Dorsolateral prefrontal cortex (tissue), 120 donors: ENCODE measurements at regions of chr11 and their contacts with region 1.

Region 1: GRCh38 chr11:72112321-72113219 is at the start of gene ANAPC15:
- DNase-seq: peak; percentile 84 to 99 (median 96)
- H3K4me3 ChIP-seq: peak within 1 kb of the TSS; percentile 62 to 100 (median 78)
- H3K27ac ChIP-seq: peak within 1 kb of the TSS; percentile 94 to 100 (median 98)
- H3K27me3 ChIP-seq: no peaks in the 10 kb centered on the region
- CTCF ChIP-seq: peak in 18 of 56 donors; percentile 4 to 38 (median 20)
- total RNA-seq, gene ANAPC15: 28.2 to 59.0 (median 40.8) TPM

Region 2: GRCh38 chr11:71928737-71929452 is 183.7 kb before region 1 on chr11 and contains the start of gene RNF121:
- intact Hi-C with region 1: loop called in 1 of 2 experiments (anchors 5 kb)
- DNase-seq: peak; percentile 96 to 99 (median 98)
- H3K4me3 ChIP-seq: peak within 1 kb of the TSS; percentile 64 to 99 (median 88)
- H3K27ac ChIP-seq: peak within 1 kb of the TSS in 58 of 59 donors; percentile 27 to 96 (median 87)
- H3K27me3 ChIP-seq: no peaks in the 10 kb centered on the region
- CTCF ChIP-seq: peak in 10 of 56 donors; percentile 3 to 58 (median 12)
- total RNA-seq, gene RNF121: 25.6 to 48.0 (median 34.6) TPM

Region 3: DNA sequence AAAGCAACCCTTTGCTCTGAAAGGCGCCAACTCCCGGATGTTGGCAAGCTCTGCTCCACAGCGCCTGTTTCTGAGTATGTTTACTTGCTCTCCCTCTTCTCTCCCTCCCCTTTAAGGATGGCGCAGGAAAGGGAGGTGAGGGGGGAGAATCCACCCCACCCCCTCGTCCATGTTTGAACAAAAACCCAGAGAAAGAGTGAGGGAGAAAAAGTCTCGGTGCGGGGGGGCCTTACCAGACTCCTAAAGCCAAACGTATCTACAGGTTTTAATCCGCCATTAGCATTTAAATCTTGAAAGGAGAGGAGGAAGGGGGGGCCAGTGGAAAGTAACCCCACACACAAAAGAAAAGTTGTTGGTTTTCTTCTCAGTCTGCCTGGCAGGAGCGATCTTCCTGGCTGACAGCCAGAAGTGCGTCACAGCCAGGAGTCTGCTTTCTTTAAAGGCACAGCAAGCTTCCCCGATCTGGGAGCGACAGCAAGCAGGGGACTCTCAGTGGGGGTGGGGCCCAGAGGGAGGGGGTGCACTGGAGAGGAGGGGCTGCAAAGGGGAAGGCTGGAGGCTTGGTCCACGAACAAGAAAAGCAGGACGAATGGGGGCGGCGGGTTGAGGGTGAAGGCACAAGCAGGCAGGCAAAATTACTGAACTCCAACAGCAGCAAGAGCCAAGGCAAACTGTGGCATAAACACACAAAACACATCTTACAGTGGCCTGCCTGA is 71.7 kb before region 1 on chr11:
- intact Hi-C with region 1: loop called (anchors 1 to 2 kb)
- DNase-seq: peak; percentile 86 to 96 (median 92)
- H3K4me3 ChIP-seq: peak overlapping the region; percentile 45 to 84 (median 71)
- H3K27ac ChIP-seq: peak overlapping the region; percentile 92 to 100 (median 100)
- H3K27me3 ChIP-seq: no peaks in the 10 kb centered on the region
- CTCF ChIP-seq: peak in 6 of 56 donors; percentile 5 to 27 (median 16)